Common myeloid progenitor, CD34-positive (primary cell): ENCODE measurements at regions of chr21 and their contacts with region 1.

Region 1: GRCh38 chr21:33976082-33977016 is 60.7 kb upstream of the ATP5PO start:
- DNase-seq: peak; percentile 32 to 83 (median 69)
- H3K4me3 ChIP-seq: peak overlapping the region in 3 of 7 experiments; percentile 43 to 53 (median 48)
- H3K27ac ChIP-seq: peak overlapping the region; percentile 52 to 80
- H3K4me1 ChIP-seq: peaks cover 13 to 36% (median 26%) of the 10 kb centered on the region in 4 experiments
- H3K27me3 ChIP-seq: no peaks in the 10 kb centered on the region

Region 2: GRCh38 chr21:33780631-33781030 is 195.7 kb before region 1 on chr21:
- CTCF ChIA-PET with region 1: no interaction called
- POLR2A ChIA-PET with region 1: no interaction called
- DNase-seq: no peak
- H3K4me3 ChIP-seq: no peak overlapping the region
- H3K27ac ChIP-seq: no peak overlapping the region
- H3K4me1 ChIP-seq: no peaks in the 10 kb centered on the region
- H3K27me3 ChIP-seq: no peaks in the 10 kb centered on the region

Region 3: GRCh38 chr21:33988237-33989017 is 12.1 kb after region 1 on chr21:
- CTCF ChIA-PET with region 1: interaction called, 12 read pairs
- POLR2A ChIA-PET with region 1: no interaction called
- DNase-seq: no peak
- H3K4me3 ChIP-seq: no peak overlapping the region
- H3K27ac ChIP-seq: no peak overlapping the region
- H3K4me1 ChIP-seq: peaks cover 0 to 5% (median 2%) of the 10 kb centered on the region in 4 experiments
- H3K27me3 ChIP-seq: no peaks in the 10 kb centered on the region

Region 4: GRCh38 chr21:34180407-34180806 is 204.1 kb after region 1 on chr21:
- CTCF ChIA-PET with region 1: no interaction called
- POLR2A ChIA-PET with region 1: no interaction called
- DNase-seq: no peak
- H3K4me3 ChIP-seq: no peak overlapping the region
- H3K27ac ChIP-seq: no peak overlapping the region
- H3K4me1 ChIP-seq: no peaks in the 10 kb centered on the region
- H3K27me3 ChIP-seq: no peaks in the 10 kb centered on the region